Calu3 (cell line): ENCODE measurements at regions of chr1 and their contacts with region 1.

Region 1: GRCh38 chr1:245156081-245156735 is 1.4 kb downstream of the KIF26B start:
- DNase-seq: peak; percentile 96
- H3K4me3 Mint-ChIP-seq: peak overlapping the region; percentile 73
- H3K27ac Mint-ChIP-seq: no peak overlapping the region
- H3K4me1 Mint-ChIP-seq: no peaks in the 10 kb centered on the region
- H3K27me3 Mint-ChIP-seq: peaks cover 76% of the 10 kb centered on the region
- CTCF ChIP-seq: peak; percentile 90

Region 2: GRCh38 chr1:244614113-244614836 is 541.9 kb before region 1 on chr1:
- CTCF ChIA-PET with region 1: no interaction called
- intact Hi-C with region 1: no loop called
- DNase-seq: peak; percentile 46
- H3K4me3 Mint-ChIP-seq: peak overlapping the region; percentile 5
- H3K27ac Mint-ChIP-seq: peak overlapping the region; percentile 46
- H3K4me1 Mint-ChIP-seq: peaks cover 25% of the 10 kb centered on the region
- H3K27me3 Mint-ChIP-seq: no peaks in the 10 kb centered on the region
- CTCF ChIP-seq: no peak

Region 3: GRCh38 chr1:245142171-245142798 is 13.9 kb before region 1 on chr1:
- CTCF ChIA-PET with region 1: interaction called, 12 read pairs
- intact Hi-C with region 1: no loop called
- DNase-seq: no peak
- H3K4me3 Mint-ChIP-seq: no peak overlapping the region
- H3K27ac Mint-ChIP-seq: no peak overlapping the region
- H3K4me1 Mint-ChIP-seq: no peaks in the 10 kb centered on the region
- H3K27me3 Mint-ChIP-seq: peaks cover 56% of the 10 kb centered on the region
- CTCF ChIP-seq: no peak

Region 4: GRCh38 chr1:245380790-245381535 is 224.8 kb after region 1 on chr1:
- CTCF ChIA-PET with region 1: interaction called, 32 read pairs
- intact Hi-C with region 1: loop called (anchors 1 kb)
- DNase-seq: no peak
- H3K4me3 Mint-ChIP-seq: no peak overlapping the region
- H3K27ac Mint-ChIP-seq: no peak overlapping the region
- H3K4me1 Mint-ChIP-seq: no peaks in the 10 kb centered on the region
- H3K27me3 Mint-ChIP-seq: peaks cover 7% of the 10 kb centered on the region
- CTCF ChIP-seq: no peak

Region 5: DNA sequence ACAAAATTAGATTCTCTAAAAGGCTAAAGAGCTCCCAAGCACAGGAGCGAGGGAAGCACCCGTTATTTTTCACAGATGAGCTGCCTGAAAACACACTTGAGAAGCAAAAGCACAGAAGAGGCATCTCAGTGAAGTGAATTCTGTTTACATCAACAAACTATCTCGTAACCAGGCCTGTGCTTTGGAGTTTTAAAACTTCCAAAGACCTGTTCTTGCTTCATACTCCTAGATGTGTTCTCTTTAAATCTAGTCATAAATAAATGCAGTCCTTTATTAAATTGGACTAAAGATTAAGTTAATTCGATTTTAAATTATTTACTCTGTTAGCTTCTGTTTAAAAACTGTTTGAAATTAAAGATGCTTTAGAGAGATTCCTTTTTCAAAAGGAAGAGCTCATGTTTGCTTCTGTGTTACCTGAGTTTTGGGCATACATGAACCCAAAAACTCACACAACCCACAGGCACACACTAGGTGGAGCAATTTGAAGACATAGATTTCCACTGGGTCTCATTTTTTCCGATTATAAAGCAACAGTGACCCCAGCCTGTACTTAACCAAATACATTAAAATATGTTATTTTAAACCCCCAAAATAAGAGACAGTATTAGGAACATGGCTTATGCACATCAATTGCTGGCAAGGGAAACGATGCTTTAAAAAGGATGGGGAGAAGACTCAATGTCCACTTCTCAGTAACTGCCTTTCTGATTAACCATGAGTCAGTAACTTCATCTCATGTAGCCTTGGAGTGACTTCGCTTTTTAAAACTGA is 702.7 kb after region 1 on chr1:
- CTCF ChIA-PET with region 1: interaction called, 3 read pairs
- intact Hi-C with region 1: loop called (anchors 10 kb)
- DNase-seq: no peak
- H3K4me3 Mint-ChIP-seq: no peak overlapping the region
- H3K27ac Mint-ChIP-seq: no peak overlapping the region
- H3K4me1 Mint-ChIP-seq: peaks cover 46% of the 10 kb centered on the region
- H3K27me3 Mint-ChIP-seq: no peaks in the 10 kb centered on the region
- CTCF ChIP-seq: no peak

Region 6: DNA sequence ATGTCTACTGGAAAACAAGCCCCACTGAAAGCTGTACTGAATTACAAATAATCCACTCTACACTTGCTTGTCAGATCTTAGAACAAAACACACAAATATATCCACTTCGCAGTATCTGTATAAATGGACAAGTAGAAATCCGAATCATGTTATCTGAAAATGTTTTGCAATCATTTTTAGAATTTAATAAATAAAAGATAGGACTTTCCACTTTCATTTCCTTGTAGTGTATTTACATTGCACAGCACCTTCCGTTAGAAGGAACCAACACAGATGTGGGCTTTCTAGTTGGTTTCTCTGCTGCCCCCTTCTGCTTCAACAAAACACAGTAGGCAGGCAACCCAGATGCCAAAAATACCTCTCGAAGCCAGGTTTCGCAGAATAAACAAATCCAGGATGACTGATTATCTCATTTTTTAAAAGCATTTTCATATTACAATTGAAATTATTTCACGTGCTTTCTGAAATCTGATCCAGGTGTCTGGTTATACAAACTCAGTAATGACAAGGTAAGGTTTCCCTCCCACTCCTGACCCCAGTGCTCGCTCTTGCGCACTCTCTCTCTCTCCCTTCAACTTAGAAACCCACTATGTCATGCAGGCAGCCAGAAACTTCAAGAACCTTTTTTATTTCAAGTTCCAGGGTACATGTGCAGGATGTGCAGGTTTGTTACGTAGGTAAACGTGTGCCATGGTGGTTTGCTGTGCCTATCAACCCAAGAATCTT is 961.0 kb after region 1 on chr1:
- CTCF ChIA-PET with region 1: no interaction called
- intact Hi-C with region 1: loop called (anchors 2 kb)
- DNase-seq: peak; percentile 67
- H3K4me3 Mint-ChIP-seq: no peak overlapping the region
- H3K27ac Mint-ChIP-seq: no peak overlapping the region
- H3K4me1 Mint-ChIP-seq: peaks cover 8% of the 10 kb centered on the region
- H3K27me3 Mint-ChIP-seq: no peaks in the 10 kb centered on the region
- CTCF ChIP-seq: peak; percentile 48

Region 7: GRCh38 chr1:246497331-246497915 is 1341.2 kb after region 1 on chr1:
- CTCF ChIA-PET with region 1: no interaction called
- intact Hi-C with region 1: loop called (anchors 1 kb)
- DNase-seq: peak; percentile 44
- H3K4me3 Mint-ChIP-seq: no peak overlapping the region
- H3K27ac Mint-ChIP-seq: no peak overlapping the region
- H3K4me1 Mint-ChIP-seq: peaks cover 22% of the 10 kb centered on the region
- H3K27me3 Mint-ChIP-seq: no peaks in the 10 kb centered on the region
- CTCF ChIP-seq: peak; percentile 46